ENCODE measurements at regions of chr11 and their contacts with region 1.

Region 1: DNA sequence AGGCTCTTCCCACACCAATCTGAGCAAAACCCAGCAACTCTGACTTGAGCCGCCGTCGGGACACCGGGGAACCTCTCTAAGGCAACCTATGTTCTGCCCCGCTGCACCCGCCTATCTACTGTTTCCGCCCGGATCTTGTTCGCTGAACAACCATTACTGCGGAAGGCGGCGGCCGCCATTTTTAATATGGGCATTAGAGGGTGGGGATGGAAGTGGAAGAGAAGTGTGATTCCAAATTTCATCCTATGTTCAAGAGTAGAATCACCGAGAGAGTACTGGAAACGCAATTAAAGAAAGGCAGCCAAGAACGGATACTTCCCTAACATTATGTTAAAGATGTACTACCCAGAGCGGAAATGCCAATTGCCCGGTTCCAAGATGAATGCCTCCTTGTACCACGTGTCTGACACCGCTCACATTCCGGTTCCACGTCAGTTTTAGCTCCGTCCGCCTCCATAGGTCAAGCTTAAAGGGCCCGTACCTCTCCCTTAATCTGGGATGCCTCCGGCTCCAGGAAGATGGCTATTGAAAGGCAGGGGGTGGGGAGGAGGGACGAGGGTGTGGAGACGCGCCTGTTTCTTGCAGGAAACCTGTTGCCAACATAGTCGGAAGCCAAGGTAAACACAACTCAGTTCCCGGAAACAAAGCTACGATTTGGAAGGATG is at the start of gene DPAGT1:
- DNase-seq: peak; percentile 76 to 95 (median 92)
- H3K4me3 ChIP-seq: peak within 1 kb of the TSS; percentile 62 to 98 (median 88)
- H3K27ac ChIP-seq: peak within 1 kb of the TSS; percentile 84 to 99 (median 96)
- H3K27me3 ChIP-seq: no peaks in the 10 kb centered on the region
- CTCF ChIP-seq: peak in 13 of 56 donors; percentile 5 to 37 (median 19)
- total RNA-seq, gene DPAGT1: 18.3 to 47.3 (median 30.8) TPM

Region 2: GRCh38 chr11:118746988-118747585 is 354.8 kb before region 1 on chr11:
- intact Hi-C with region 1: no loop called
- DNase-seq: no peak
- H3K4me3 ChIP-seq: no peak overlapping the region
- H3K27ac ChIP-seq: peak overlapping the region in 4 of 59 donors; percentile 4 to 55 (median 16)
- H3K27me3 ChIP-seq: no peaks in the 10 kb centered on the region
- CTCF ChIP-seq: no peak

Region 3: GRCh38 chr11:119121008-119121810 is 19.3 kb after region 1 on chr11 and contains the start of gene HINFP:
- intact Hi-C with region 1: loop called (anchors 2 kb)
- DNase-seq: peak; percentile 99 to 100 (median 100)
- H3K4me3 ChIP-seq: peak within 1 kb of the TSS; percentile 67 to 99 (median 93)
- H3K27ac ChIP-seq: peak within 1 kb of the TSS; percentile 57 to 97 (median 91)
- H3K27me3 ChIP-seq: no peaks in the 10 kb centered on the region
- CTCF ChIP-seq: peak in 26 of 56 donors; percentile 6 to 55 (median 22)
- total RNA-seq, gene HINFP: 29.8 to 70.5 (median 47.9) TPM

Region 4: GRCh38 chr11:119196833-119197483 is 95.1 kb after region 1 on chr11:
- intact Hi-C with region 1: loop called (anchors 5 to 10 kb)
- DNase-seq: peak in 4 of 10 donors; percentile 24 to 72 (median 49)
- H3K4me3 ChIP-seq: no peak overlapping the region
- H3K27ac ChIP-seq: no peak overlapping the region
- H3K27me3 ChIP-seq: no peaks in the 10 kb centered on the region
- CTCF ChIP-seq: peak; percentile 62 to 87 (median 76)

Region 5: DNA sequence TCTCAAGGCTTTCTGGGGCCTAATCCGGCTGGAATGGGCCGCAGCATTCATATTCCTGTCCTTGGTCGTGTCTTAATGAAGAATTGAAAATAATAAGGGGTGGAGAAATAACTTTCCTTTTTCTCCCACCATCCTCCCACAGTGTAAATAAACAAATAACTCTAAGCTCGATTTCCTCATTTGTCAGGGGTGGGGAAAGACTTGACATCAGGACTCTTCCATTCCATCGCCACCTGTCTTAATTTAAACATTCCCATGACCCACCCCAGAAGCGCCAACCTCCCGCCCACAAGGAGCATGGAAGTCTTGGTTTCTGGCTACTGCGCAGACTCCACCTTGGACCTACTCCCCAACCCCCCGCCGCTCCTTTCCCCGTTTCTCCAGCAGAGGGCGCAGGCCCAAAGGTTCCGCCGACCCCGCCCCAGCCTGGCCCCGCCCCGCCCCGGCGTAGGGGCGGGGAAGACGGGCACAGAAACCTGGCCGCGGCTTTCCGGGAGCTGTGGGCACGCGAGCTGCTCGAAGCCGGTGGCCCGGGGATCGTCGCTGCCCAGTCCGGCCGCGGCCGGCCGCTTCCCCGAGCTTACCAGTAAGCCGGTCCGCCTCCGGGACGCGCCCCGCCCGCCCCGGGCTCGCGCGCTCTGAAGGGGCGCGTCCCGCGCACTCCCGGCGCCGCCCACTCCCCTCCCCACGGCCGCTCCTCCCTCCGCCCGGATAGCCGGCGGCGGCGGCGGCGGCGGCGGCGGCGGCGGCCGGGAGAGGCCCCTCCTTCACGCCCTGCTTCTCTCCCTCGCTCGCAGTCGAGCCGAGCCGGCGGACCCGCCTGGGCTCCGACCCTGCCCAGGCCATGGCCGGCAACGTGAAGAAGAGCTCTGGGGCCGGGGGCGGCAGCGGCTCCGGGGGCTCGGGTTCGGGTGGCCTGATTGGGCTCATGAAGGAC is 104.0 kb after region 1 on chr11 and contains the start of gene CBL:
- intact Hi-C with region 1: loop called in 1 of 2 experiments (anchors 10 kb)
- DNase-seq: peak; percentile 86 to 97 (median 92)
- H3K4me3 ChIP-seq: peak within 1 kb of the TSS; percentile 48 to 99 (median 92)
- H3K27ac ChIP-seq: peak within 1 kb of the TSS; percentile 49 to 97 (median 91)
- H3K27me3 ChIP-seq: no peaks in the 10 kb centered on the region
- CTCF ChIP-seq: peak; percentile 23 to 97 (median 86)
- total RNA-seq, gene CBL: 22.9 to 40.0 (median 30.5) TPM

Region 6: DNA sequence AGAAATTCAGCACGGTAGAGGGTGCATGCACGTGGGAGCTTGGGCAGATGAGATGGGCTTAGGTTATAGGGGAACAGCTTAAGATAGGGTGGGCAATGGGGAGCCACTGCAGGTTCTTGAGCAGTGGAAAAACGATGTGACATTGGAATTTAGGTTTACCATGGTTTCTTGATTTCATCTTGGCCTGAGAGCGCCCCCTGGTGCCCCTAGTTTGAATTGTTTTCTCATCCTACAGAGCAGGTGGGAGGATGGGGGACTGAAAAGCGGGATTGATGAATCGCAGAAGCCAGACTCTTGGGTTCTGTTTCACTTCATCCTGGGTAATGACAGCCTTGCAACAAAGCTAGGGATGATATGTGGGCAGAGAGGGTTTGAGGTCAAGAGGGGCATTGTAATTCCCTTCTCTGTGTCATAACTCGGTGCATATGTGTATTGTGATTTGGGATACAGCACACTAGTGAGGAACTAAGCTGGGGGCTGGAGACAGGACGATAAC is 221.7 kb after region 1 on chr11:
- intact Hi-C with region 1: loop called (anchors 5 to 10 kb)
- DNase-seq: peak in 7 of 10 donors; percentile 70 to 92 (median 81)
- H3K4me3 ChIP-seq: peak overlapping the region in 2 of 59 donors; percentile 5 to 17
- H3K27ac ChIP-seq: peak overlapping the region in 4 of 59 donors; percentile 12 to 61 (median 26)
- H3K27me3 ChIP-seq: no peaks in the 10 kb centered on the region
- CTCF ChIP-seq: peak; percentile 72 to 91 (median 85)

Measured in dorsolateral prefrontal cortex (tissue), 120 donors.